ENCODE measurements at regions of chr1 and their contacts with region 1.

Region 1: DNA sequence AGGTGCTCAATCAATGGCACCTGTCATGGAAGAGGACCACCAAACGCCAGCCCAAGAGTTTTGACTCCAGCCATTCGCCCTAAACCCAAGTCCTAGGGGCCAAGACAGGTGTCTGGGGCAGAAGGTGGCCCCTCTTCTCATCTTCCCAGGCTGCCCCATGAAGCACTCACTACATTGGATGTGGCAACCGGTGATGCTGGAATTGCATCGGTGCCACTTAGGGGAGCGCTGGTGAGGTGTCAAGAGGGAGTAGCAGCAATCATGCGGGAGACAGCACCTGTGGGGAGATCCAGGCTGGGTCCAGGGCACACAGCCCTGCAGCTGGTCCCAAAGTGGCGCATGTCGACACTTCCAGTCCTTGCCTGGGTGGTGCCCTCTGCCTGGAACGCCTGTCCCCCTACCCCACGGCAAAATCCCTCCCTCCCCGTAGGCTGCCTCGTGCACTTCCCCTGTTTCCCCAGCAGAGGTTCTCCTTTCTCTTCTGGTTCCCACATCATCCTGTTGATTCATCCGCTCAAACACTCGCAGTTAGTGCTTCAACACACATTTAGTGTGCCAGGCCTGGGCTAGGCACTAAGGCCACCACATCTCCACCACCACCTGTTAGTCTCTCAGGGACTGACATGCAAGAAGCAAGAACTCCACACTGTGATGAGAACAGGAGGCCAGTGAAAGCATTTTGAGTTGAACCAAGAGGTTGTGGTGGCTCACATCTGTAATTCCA is 18.5 kb downstream of the PLA2G2D start:
- DNase-seq: peak; percentile 57
- H3K4me3 ChIP-seq: no peak overlapping the region
- H3K27ac ChIP-seq: no peak overlapping the region
- H3K4me1 ChIP-seq: peaks cover 12% of the 10 kb centered on the region
- H3K27me3 ChIP-seq: no peaks in the 10 kb centered on the region
- CTCF ChIP-seq: peak; percentile 86 to 93

Region 2: GRCh38 chr1:19918057-19918456 is 182.7 kb before region 1 on chr1:
- CTCF ChIA-PET with region 1: no interaction called
- dilution Hi-C with region 1: no loop called
- in situ Hi-C with region 1: no loop called
- intact Hi-C with region 1: loop called (anchors 1 kb)
- DNase-seq: peak; percentile 60
- H3K4me3 ChIP-seq: no peak overlapping the region
- H3K27ac ChIP-seq: no peak overlapping the region
- H3K4me1 ChIP-seq: no peaks in the 10 kb centered on the region
- H3K27me3 ChIP-seq: no peaks in the 10 kb centered on the region
- CTCF ChIP-seq: peak; percentile 90 to 95

Region 3: GRCh38 chr1:19987719-19988118 is 113.1 kb before region 1 on chr1:
- CTCF ChIA-PET with region 1: no interaction called
- dilution Hi-C with region 1: no loop called
- in situ Hi-C with region 1: no loop called
- intact Hi-C with region 1: no loop called
- DNase-seq: no peak
- H3K4me3 ChIP-seq: no peak overlapping the region
- H3K27ac ChIP-seq: no peak overlapping the region
- H3K4me1 ChIP-seq: no peaks in the 10 kb centered on the region
- H3K27me3 ChIP-seq: peaks cover 7% of the 10 kb centered on the region
- CTCF ChIP-seq: no peak